A549 (cell line): ENCODE measurements at regions of chr10 and their contacts with region 1.

Region 1: GRCh38 chr10:93482145-93482834 is at the start of gene MYOF:
- DNase-seq: peak; percentile 87 to 91
- ATAC-seq: peak; percentile 84 to 93
- H3K4me3 ChIP-seq: peak within 1 kb of the TSS; percentile 61
- H3K27ac ChIP-seq: peak within 1 kb of the TSS; percentile 93
- H3K4me1 ChIP-seq: peaks cover 30% of the 10 kb centered on the region
- CTCF ChIP-seq: peak; percentile 63
- EP300 ChIP-seq: no peak
- POLR2A ChIP-seq: peak; percentile 68
- RAD21 ChIP-seq: peak; percentile 85 to 90
- polyA plus RNA-seq, gene MYOF: 229 and 265 TPM in 2 replicates

Region 2: GRCh38 chr10:93352638-93353383 is 129.5 kb before region 1 on chr10:
- CTCF ChIA-PET with region 1: interaction called, 40 read pairs
- POLR2A ChIA-PET with region 1: no interaction called
- DNase-seq: peak; percentile 38 to 44
- ATAC-seq: peak in 1 of 2 experiments; percentile 58; a peak in 3 of 6 replicates
- H3K4me3 ChIP-seq: no peak overlapping the region
- H3K27ac ChIP-seq: no peak overlapping the region
- H3K4me1 ChIP-seq: no peaks in the 10 kb centered on the region
- CTCF ChIP-seq: peak; percentile 86
- EP300 ChIP-seq: no peak
- POLR2A ChIP-seq: no peak
- RAD21 ChIP-seq: peak; percentile 49 to 58

Region 3: DNA sequence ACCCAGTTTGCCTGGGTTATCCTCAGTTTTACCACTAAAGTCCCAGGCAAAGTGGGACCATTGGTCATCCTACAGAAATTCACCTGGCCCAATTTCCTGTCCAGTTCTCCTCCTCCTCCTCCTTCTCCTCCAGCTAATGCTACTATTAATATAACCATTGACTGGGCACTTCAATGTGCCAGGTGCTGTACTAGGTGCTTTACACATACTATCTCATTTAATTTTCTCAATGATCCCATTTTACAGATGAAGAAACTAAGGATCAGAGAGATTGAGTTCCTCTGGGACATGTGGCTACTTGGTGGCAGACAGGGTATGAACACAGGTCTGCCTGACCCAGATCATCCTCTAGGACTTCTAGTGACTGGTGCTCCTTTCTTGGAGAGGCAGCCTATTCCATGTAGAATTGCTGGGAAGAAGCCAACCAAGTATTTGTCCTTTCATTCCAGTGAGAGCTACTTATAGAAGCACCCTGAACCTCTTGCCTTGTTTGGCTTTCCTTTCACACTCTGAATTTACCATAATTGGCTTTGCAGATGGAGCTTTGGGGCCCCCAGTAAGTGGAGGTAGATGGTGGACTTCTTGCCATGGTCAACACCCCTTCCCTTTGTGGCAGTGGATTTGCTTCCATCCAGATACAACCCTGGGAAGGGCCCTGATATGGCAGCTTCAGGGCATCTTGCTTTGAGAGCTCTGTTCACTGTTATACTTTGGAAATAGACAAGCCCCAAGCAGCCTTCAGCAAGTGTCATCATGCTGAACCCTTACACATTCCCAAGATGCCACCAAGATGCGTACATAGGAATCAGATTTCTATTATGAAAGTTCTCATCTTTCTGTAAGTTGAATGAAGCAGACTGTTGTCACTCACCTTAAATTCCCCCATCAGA is 78.9 kb before region 1 on chr10:
- CTCF ChIA-PET with region 1: interaction called, 32 read pairs
- POLR2A ChIA-PET with region 1: no interaction called
- DNase-seq: no peak
- ATAC-seq: no peak; a peak in 1 of 6 replicates
- H3K4me3 ChIP-seq: no peak overlapping the region
- H3K27ac ChIP-seq: no peak overlapping the region; a peak in 1 of 6 replicates
- H3K4me1 ChIP-seq: peaks cover 14% of the 10 kb centered on the region
- CTCF ChIP-seq: no peak
- EP300 ChIP-seq: no peak
- POLR2A ChIP-seq: no peak
- RAD21 ChIP-seq: no peak

Region 4: DNA sequence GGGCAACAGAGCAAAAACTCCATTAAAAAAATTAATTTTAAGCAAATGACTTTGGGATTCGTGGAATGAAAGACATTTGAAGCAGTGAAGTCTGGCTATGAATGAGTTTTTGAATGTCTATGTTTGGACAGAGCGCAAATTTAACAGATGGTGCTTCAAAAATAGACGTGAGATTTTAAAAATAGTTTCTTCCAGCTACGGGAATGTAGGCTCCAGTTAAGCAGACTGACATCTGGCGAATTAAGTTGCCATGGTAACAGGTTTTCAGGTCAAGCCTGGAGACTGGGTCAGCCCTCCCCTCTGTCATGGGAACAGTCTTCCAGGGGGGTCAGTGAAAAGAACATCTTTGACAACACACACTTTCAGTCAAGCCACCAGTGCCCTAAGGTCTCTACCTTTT is 62.2 kb before region 1 on chr10:
- CTCF ChIA-PET with region 1: interaction called, 14 read pairs
- POLR2A ChIA-PET with region 1: no interaction called
- DNase-seq: no peak
- ATAC-seq: no peak
- H3K4me3 ChIP-seq: no peak overlapping the region
- H3K27ac ChIP-seq: no peak overlapping the region; a peak in 1 of 6 replicates
- H3K4me1 ChIP-seq: peaks cover 15% of the 10 kb centered on the region
- CTCF ChIP-seq: no peak
- EP300 ChIP-seq: no peak
- POLR2A ChIP-seq: no peak
- RAD21 ChIP-seq: no peak

Region 5: GRCh38 chr10:93437088-93437945 is 45.0 kb before region 1 on chr10:
- CTCF ChIA-PET with region 1: interaction called, 98 read pairs
- POLR2A ChIA-PET with region 1: interaction called, 24 read pairs
- DNase-seq: peak; percentile 89 to 96
- ATAC-seq: peak; percentile 93 to 94
- H3K4me3 ChIP-seq: peak overlapping the region; percentile 13; the same call in 2 of the 3 replicates
- H3K27ac ChIP-seq: peak overlapping the region; percentile 97 to 98
- H3K4me1 ChIP-seq: peaks cover 93% of the 10 kb centered on the region
- CTCF ChIP-seq: no peak
- EP300 ChIP-seq: peak in 1 of 2 experiments; percentile 52; a peak in 2 of 5 replicates
- POLR2A ChIP-seq: no peak
- RAD21 ChIP-seq: peak in 1 of 2 experiments; percentile 22; a peak in 3 of 5 replicates

Region 6: GRCh38 chr10:93458821-93459257 is 23.5 kb before region 1 on chr10:
- CTCF ChIA-PET with region 1: interaction called, 76 read pairs
- POLR2A ChIA-PET with region 1: interaction called, 114 read pairs
- DNase-seq: peak; percentile 91 to 99
- ATAC-seq: peak; percentile 90 to 96
- H3K4me3 ChIP-seq: no peak overlapping the region
- H3K27ac ChIP-seq: peak overlapping the region; percentile 96 to 99
- H3K4me1 ChIP-seq: peaks cover 84% of the 10 kb centered on the region
- CTCF ChIP-seq: no peak
- EP300 ChIP-seq: peak; percentile 61 to 82; a peak in 2 of 5 replicates
- POLR2A ChIP-seq: no peak
- RAD21 ChIP-seq: peak; percentile 41 to 45

Region 7: GRCh38 chr10:93496322-93497041 is 14.2 kb after region 1 on chr10 and contains the start of gene CEP55:
- CTCF ChIA-PET with region 1: interaction called, 24 read pairs
- POLR2A ChIA-PET with region 1: interaction called, 12 read pairs
- DNase-seq: peak; percentile 84 to 96
- ATAC-seq: peak; percentile 97 to 99
- H3K4me3 ChIP-seq: peak within 1 kb of the TSS; percentile 48
- H3K27ac ChIP-seq: peak within 1 kb of the TSS; percentile 79 to 90
- H3K4me1 ChIP-seq: peaks cover 20% of the 10 kb centered on the region
- CTCF ChIP-seq: no peak
- EP300 ChIP-seq: no peak
- POLR2A ChIP-seq: peak; percentile 55
- RAD21 ChIP-seq: no peak
- polyA plus RNA-seq, gene CEP55: 63.5 and 87.0 TPM in 2 replicates

Region 8: GRCh38 chr10:93554760-93555432 is 72.6 kb after region 1 on chr10:
- CTCF ChIA-PET with region 1: no interaction called
- POLR2A ChIA-PET with region 1: no interaction called
- DNase-seq: peak; percentile 76 to 82
- ATAC-seq: peak; percentile 88 to 96
- H3K4me3 ChIP-seq: no peak overlapping the region
- H3K27ac ChIP-seq: peak overlapping the region; percentile 19 to 71; a peak in 5 of 6 replicates
- H3K4me1 ChIP-seq: peaks cover 31% of the 10 kb centered on the region
- CTCF ChIP-seq: peak; percentile 71
- EP300 ChIP-seq: no peak
- POLR2A ChIP-seq: no peak
- RAD21 ChIP-seq: peak; percentile 69 to 81